HCT116 (cell line): ENCODE measurements at regions of chr2 and their contacts with region 1.

Region 1: GRCh38 chr2:219388127-219388844 is 574 bp upstream of the DNPEP start:
- DNase-seq: peak; percentile 90
- ATAC-seq: peak; percentile 78
- H3K4me3 ChIP-seq: peak overlapping the region; percentile 31 to 49
- H3K27ac ChIP-seq: peak overlapping the region; percentile 63
- H3K4me1 ChIP-seq: peaks cover 9 to 18% of the 10 kb centered on the region in 2 experiments; a peak in 3 of 4 replicates
- H3K27me3 ChIP-seq: no peaks in the 10 kb centered on the region
- CTCF ChIP-seq: peak; percentile 38 to 64 (median 60); a peak in 4 of 6 replicates
- POLR2A ChIP-seq: no peak
- RAD21 ChIP-seq: no peak

Region 2: GRCh38 chr2:219177552-219178376 is 210.5 kb before region 1 on chr2 and contains the start of gene RETREG2:
- CTCF ChIA-PET with region 1: no interaction called
- POLR2A ChIA-PET with region 1: no interaction called
- RAD21 ChIA-PET with region 1: no interaction called
- intact Hi-C with region 1: loop called (anchors 5 kb)
- DNase-seq: peak; percentile 84
- ATAC-seq: peak; percentile 68
- H3K4me3 ChIP-seq: peak within 1 kb of the TSS; percentile 87 to 93
- H3K27ac ChIP-seq: peak within 1 kb of the TSS; percentile 97
- H3K4me1 ChIP-seq: peaks cover 10 to 27% of the 10 kb centered on the region in 2 experiments
- H3K27me3 ChIP-seq: no peaks in the 10 kb centered on the region
- CTCF ChIP-seq: peak in 1 of 3 experiments; percentile 28; a peak in 1 of 6 replicates
- POLR2A ChIP-seq: peak; percentile 85
- RAD21 ChIP-seq: no peak
- total RNA-seq, gene RETREG2: 63.7 TPM

Region 3: GRCh38 chr2:219234331-219234730 is 154.0 kb before region 1 on chr2:
- CTCF ChIA-PET with region 1: no interaction called
- POLR2A ChIA-PET with region 1: no interaction called
- RAD21 ChIA-PET with region 1: no interaction called
- intact Hi-C with region 1: no loop called
- DNase-seq: no peak
- ATAC-seq: no peak
- H3K4me3 ChIP-seq: no peak overlapping the region
- H3K27ac ChIP-seq: no peak overlapping the region
- H3K4me1 ChIP-seq: peaks cover 0 to 7% of the 10 kb centered on the region in 2 experiments; a peak in 2 of 4 replicates
- H3K27me3 ChIP-seq: no peaks in the 10 kb centered on the region
- CTCF ChIP-seq: no peak
- POLR2A ChIP-seq: no peak
- RAD21 ChIP-seq: no peak

Region 4: DNA sequence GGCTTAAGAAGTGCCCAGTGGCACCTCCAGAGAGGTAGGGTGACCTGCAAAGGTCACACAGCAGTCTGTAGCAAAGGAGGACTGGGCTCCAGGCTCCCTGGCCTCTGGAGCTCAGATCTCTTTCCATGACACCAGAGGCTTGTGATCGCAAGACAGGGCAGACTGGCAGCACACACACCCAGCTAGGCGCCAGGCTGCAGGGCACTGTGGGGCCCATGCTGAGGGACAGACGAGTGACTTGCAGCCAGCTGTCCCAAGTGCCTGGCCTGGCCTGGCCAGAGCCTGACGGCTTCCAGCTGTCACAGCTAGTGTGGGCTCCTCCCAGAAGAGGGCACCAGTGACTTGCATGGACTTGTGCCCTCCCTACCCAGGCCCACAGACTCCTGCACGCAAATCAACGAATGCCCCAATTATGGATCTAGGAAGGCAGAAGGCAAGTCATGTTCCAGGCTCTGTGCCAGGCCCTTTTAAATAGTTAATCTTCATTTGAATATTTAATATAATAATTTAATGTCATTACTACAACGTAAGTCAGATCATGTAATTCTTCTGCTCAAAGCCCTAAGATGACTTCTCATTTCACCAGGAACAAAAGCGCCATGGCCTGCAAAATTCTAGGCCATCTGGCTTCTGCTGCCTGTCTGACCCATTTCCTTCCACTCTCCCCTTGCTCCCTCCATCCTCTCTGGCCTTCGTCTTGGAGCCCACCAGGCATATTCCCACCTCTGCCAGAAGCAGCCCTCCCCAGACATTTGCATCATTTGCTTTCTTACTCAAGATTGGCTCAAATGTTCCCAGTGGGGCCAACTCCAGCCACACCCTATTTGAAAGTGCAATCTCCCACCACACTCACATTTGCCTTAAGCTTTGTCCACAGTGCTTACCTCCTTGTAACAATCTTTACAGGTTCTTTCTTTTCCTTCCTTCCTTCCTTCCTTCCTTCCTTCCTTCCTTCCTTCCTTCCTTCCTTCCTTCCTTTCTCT is 42.6 kb after region 1 on chr2:
- CTCF ChIA-PET with region 1: interaction called, 3 read pairs
- POLR2A ChIA-PET with region 1: no interaction called
- RAD21 ChIA-PET with region 1: no interaction called
- intact Hi-C with region 1: loop called (anchors 2 kb)
- DNase-seq: no peak
- ATAC-seq: peak; percentile 85
- H3K4me3 ChIP-seq: no peak overlapping the region
- H3K27ac ChIP-seq: no peak overlapping the region
- H3K4me1 ChIP-seq: peaks cover 6 to 32% of the 10 kb centered on the region in 2 experiments
- H3K27me3 ChIP-seq: no peaks in the 10 kb centered on the region
- CTCF ChIP-seq: peak; percentile 10 to 53 (median 29); a peak in 2 of 6 replicates
- POLR2A ChIP-seq: no peak
- RAD21 ChIP-seq: peak; percentile 72

Region 5: GRCh38 chr2:219509780-219510511 is 121.7 kb after region 1 on chr2:
- CTCF ChIA-PET with region 1: no interaction called
- POLR2A ChIA-PET with region 1: no interaction called
- RAD21 ChIA-PET with region 1: no interaction called
- intact Hi-C with region 1: no loop called
- DNase-seq: no peak
- ATAC-seq: peak; percentile 90
- H3K4me3 ChIP-seq: 0 out of 4 replicates have a peak overlapping the region, but pooled peaks of 1 of the 2 experiments have one; percentile 2
- H3K27ac ChIP-seq: no peak overlapping the region
- H3K4me1 ChIP-seq: peaks cover 0 to 19% of the 10 kb centered on the region in 2 experiments; a peak in 2 of 4 replicates
- H3K27me3 ChIP-seq: no peaks in the 10 kb centered on the region
- CTCF ChIP-seq: peak; percentile 59 to 91 (median 80); a peak in 5 of 6 replicates
- POLR2A ChIP-seq: no peak
- RAD21 ChIP-seq: peak; percentile 70

Region 6: DNA sequence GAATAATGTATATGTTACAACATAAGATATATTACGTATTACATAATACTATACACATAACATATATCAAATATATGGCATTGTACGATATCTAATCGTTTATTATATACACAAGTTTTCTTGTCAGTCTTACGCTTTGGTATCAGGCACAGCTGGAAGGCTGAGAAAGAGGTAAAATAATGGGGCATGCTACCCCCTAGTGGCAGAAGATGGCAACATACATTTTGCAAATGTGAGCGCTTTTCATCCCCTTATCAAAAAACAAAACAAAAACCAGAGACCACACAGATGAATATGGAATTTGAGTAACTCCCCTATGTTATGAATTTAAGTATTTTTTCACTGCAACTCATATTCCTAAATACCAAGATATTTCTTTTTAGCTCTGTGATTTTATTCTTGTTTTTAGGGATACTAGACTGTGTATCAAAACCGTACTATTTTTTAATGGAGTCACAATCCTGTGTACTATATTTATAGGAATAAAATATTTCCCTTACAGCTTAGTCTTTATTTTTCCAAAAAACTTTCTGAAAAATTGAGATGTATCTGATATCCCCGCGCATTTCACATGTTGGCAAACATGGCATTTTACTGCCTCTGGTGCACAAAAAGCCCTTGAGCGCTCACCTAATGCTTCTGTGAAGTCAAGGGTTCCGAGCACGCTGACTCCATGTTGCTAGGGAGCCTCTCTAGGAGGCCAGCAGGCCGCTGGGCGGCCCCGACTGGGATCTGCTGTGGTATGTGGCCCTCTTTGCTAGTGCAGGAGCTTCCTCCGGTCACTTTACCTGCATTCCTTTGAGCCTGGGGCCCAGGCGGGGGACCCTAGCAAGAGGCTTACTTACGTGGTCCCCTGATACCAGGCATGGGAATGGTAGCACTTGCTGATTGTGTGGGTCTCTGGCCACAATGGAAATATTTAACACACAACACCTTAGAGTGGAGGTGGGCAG is 301.7 kb after region 1 on chr2:
- CTCF ChIA-PET with region 1: no interaction called
- POLR2A ChIA-PET with region 1: no interaction called
- RAD21 ChIA-PET with region 1: no interaction called
- intact Hi-C with region 1: loop called (anchors 5 kb)
- DNase-seq: no peak
- ATAC-seq: no peak
- H3K4me3 ChIP-seq: peak overlapping the region; percentile 61 to 72
- H3K27ac ChIP-seq: peak overlapping the region; percentile 98
- H3K4me1 ChIP-seq: peaks cover 61 to 96% of the 10 kb centered on the region in 2 experiments
- H3K27me3 ChIP-seq: no peaks in the 10 kb centered on the region
- CTCF ChIP-seq: peak in 2 of 3 experiments; percentile 31 to 73; a peak in 4 of 6 replicates
- POLR2A ChIP-seq: no peak
- RAD21 ChIP-seq: no peak

Region 7: GRCh38 chr2:219912491-219912921 is 524.2 kb after region 1 on chr2:
- CTCF ChIA-PET with region 1: no interaction called
- POLR2A ChIA-PET with region 1: no interaction called
- RAD21 ChIA-PET with region 1: no interaction called
- intact Hi-C with region 1: no loop called
- DNase-seq: no peak
- ATAC-seq: no peak
- H3K4me3 ChIP-seq: no peak overlapping the region
- H3K27ac ChIP-seq: no peak overlapping the region
- H3K4me1 ChIP-seq: no peaks in the 10 kb centered on the region
- H3K27me3 ChIP-seq: no peaks in the 10 kb centered on the region
- CTCF ChIP-seq: no peak
- POLR2A ChIP-seq: no peak
- RAD21 ChIP-seq: no peak